PC-9 (cell line): ENCODE measurements at regions of chr12 and their contacts with region 1.

Region 1: GRCh38 chr12:102879144-102879763 is 37.8 kb downstream of the PAH start:
- DNase-seq: peak; percentile 29 to 63
- H3K4me3 ChIP-seq: no peak overlapping the region
- H3K27ac ChIP-seq: no peak overlapping the region
- H3K4me1 ChIP-seq: no peaks in the 10 kb centered on the region
- H3K27me3 ChIP-seq: no peaks in the 10 kb centered on the region
- CTCF ChIP-seq: peak; percentile 59

Region 2: GRCh38 chr12:101714877-101715444 is 1164.3 kb before region 1 on chr12:
- CTCF ChIA-PET with region 1: interaction called, 12 read pairs
- POLR2A ChIA-PET with region 1: no interaction called
- intact Hi-C with region 1: no loop called
- DNase-seq: no peak
- H3K4me3 ChIP-seq: no peak overlapping the region
- H3K27ac ChIP-seq: no peak overlapping the region
- H3K4me1 ChIP-seq: no peaks in the 10 kb centered on the region
- H3K27me3 ChIP-seq: no peaks in the 10 kb centered on the region
- CTCF ChIP-seq: no peak

Region 3: GRCh38 chr12:102095675-102096263 is 783.5 kb before region 1 on chr12:
- CTCF ChIA-PET with region 1: no interaction called
- POLR2A ChIA-PET with region 1: no interaction called
- intact Hi-C with region 1: loop called (anchors 5 kb)
- DNase-seq: peak in 1 of 2 experiments; percentile 41
- H3K4me3 ChIP-seq: no peak overlapping the region
- H3K27ac ChIP-seq: no peak overlapping the region
- H3K4me1 ChIP-seq: no peaks in the 10 kb centered on the region
- H3K27me3 ChIP-seq: no peaks in the 10 kb centered on the region
- CTCF ChIP-seq: peak; percentile 65

Region 4: GRCh38 chr12:103632554-103633216 is 753.4 kb after region 1 on chr12:
- CTCF ChIA-PET with region 1: no interaction called
- POLR2A ChIA-PET with region 1: no interaction called
- intact Hi-C with region 1: loop called (anchors 1 kb)
- DNase-seq: peak; percentile 38 to 73
- H3K4me3 ChIP-seq: no peak overlapping the region
- H3K27ac ChIP-seq: no peak overlapping the region
- H3K4me1 ChIP-seq: no peaks in the 10 kb centered on the region
- H3K27me3 ChIP-seq: peaks cover 18% of the 10 kb centered on the region
- CTCF ChIP-seq: peak; percentile 93